ENCODE measurements at regions of chr10 and their contacts with region 1.

Region 1: DNA sequence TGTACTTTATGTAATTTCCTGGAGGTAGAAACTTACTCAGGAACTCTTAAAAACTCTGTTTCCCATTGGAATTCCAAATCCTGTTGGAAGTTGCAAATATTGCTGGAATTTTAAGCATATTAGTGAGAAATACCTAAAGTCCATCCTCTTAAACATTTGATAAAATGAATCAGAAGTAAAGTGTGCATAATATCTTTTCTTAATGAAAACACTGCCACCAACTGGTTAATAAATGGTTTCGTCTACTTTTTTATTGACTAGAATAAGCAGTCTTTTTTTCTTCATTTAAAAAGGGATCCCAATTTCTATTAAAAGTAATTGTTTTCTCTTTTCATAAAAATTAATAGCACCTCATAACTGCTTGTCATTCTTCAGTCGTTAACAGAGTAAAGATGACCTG is 28.3 kb downstream of the NPS start:
- DNase-seq: no peak
- H3K4me3 ChIP-seq: no peak overlapping the region
- H3K27ac ChIP-seq: no peak overlapping the region
- H3K4me1 ChIP-seq: no peaks in the 10 kb centered on the region
- H3K27me3 ChIP-seq: peaks cover 4% of the 10 kb centered on the region
- CTCF ChIP-seq: peak; percentile 7 to 34

Region 2: GRCh38 chr10:127243490-127244272 is 333.7 kb before region 1 on chr10:
- CTCF ChIA-PET with region 1: no interaction called
- dilution Hi-C with region 1: no loop called
- in situ Hi-C with region 1: no loop called
- intact Hi-C with region 1: loop called (anchors 2 kb)
- DNase-seq: peak; percentile 11
- H3K4me3 ChIP-seq: no peak overlapping the region
- H3K27ac ChIP-seq: no peak overlapping the region
- H3K4me1 ChIP-seq: no peaks in the 10 kb centered on the region
- H3K27me3 ChIP-seq: no peaks in the 10 kb centered on the region
- CTCF ChIP-seq: peak; percentile 74 to 77

Region 3: DNA sequence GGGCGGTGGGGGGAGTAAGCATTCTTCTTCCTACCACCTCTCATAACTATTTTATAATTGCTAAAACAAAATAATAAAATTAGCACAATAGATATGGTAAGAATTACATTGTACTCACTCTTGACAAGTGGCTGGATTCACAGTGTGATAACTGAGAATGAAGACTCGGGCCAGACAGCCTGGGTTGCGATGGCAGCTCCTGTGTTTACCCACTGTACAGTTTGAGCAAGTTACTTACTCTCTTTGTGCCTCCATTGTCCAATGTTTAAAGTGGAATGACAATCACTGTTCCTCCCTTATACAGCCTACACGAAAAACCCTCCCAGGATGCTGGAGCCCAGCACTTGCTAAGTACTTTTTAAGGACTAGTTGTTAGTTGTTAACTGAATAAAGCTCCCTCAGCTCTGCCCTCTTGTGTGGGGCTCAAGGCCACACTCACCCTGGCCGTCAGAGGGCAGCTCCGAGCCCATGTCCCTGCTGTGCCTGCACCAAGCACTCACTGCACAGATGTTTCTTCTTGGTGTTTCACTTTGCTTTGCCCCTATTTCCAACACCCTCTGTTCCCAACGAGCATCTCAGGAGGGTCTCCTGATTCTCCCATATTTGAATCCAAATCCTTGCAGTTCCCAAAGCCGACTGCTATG is 84.6 kb before region 1 on chr10:
- CTCF ChIA-PET with region 1: no interaction called
- dilution Hi-C with region 1: no loop called
- in situ Hi-C with region 1: no loop called
- intact Hi-C with region 1: loop called (anchors 2 kb)
- DNase-seq: no peak
- H3K4me3 ChIP-seq: no peak overlapping the region
- H3K27ac ChIP-seq: no peak overlapping the region
- H3K4me1 ChIP-seq: no peaks in the 10 kb centered on the region
- H3K27me3 ChIP-seq: peaks cover 2% of the 10 kb centered on the region
- CTCF ChIP-seq: peak in 1 of 2 donors; percentile 40

Region 4: DNA sequence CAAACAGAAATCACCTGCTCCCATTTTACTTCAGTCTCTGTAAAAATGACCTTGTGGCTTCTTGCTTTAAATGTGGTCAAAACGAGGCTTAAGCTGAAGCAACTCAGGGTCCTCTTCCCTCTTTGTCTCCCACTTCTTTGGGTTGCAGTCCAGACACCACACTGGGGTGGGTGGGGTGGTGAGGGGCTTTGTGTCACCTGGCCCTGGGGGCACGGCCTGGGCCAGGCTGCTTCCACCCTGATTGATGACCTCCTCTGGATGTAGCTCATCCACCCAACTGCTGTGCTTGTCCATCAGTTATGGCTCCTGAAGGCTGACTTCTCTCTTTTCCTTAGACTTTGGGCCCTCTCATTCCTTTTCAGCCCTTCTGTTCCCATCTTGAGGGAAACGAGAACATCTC is 55.1 kb before region 1 on chr10:
- CTCF ChIA-PET with region 1: no interaction called
- dilution Hi-C with region 1: no loop called
- in situ Hi-C with region 1: no loop called
- intact Hi-C with region 1: no loop called
- DNase-seq: no peak
- H3K4me3 ChIP-seq: no peak overlapping the region
- H3K27ac ChIP-seq: no peak overlapping the region
- H3K4me1 ChIP-seq: peaks cover 6% of the 10 kb centered on the region
- H3K27me3 ChIP-seq: no peaks in the 10 kb centered on the region
- CTCF ChIP-seq: no peak